Natural killer cell (primary cell): ENCODE measurements at regions of chr12 and their contacts with region 1.

Region 1: DNA sequence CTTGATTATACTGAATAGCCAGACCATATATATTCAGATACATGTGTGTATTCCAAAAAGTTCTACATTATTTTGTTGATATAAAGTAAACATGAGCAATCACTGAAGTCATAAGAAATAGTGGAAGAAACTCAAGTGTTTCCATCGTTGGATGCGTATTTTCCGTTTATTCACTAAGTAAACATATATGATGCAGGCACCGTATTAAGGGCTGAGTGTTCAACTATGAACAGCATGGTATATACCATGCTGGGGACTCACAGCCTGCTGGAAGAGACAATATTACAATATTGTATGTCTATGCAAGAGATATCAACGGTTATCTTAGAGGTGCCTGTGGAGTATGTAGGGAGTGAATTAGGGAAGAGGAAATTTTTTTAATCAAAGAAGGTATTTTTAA is 1.2 kb downstream of the PYROXD1 start:
- DNase-seq: peak in 1 of 2 donors; percentile 23
- ATAC-seq: no peak
- H3K4me3 ChIP-seq: peak overlapping the region; percentile 100
- H3K4me3 Mint-ChIP-seq: peak overlapping the region; percentile 94
- H3K27ac ChIP-seq: no peak overlapping the region
- H3K27ac Mint-ChIP-seq: peak overlapping the region; percentile 89 to 91
- H3K4me1 ChIP-seq: peaks cover 14% of the 10 kb centered on the region
- H3K4me1 Mint-ChIP-seq: peaks cover 36 to 40% of the 10 kb centered on the region in 2 donors
- H3K27me3 ChIP-seq: no peaks in the 10 kb centered on the region
- H3K27me3 Mint-ChIP-seq: no peaks in the 10 kb centered on the region
- CTCF ChIP-seq: no peak

Region 2: DNA sequence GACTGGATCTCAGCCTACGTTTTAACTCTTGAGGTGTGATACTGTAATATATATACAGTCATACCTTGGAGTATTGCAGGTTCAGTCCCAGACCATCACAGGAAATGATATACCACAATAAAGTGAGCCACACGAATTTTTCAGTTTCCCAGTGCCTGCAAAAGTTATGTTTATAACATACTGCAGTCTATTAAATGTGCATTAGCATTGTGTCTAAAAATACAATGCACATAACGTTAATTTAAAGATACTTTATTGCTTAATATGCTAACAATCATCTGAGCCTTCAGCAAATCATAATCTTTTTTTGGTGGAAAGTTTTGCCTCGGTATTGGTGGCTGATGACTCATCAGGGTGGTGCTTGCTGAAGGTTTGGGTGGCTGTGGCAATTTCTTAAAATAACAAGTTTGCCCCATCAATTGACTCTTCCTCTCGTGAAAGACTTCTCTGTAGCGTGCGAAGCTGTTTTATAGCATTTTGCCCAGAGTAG is 17.7 kb after region 1 on chr12:
- intact Hi-C with region 1: loop called (anchors 2 kb)
- DNase-seq: peak; percentile 19 to 72
- ATAC-seq: peak; percentile 77 to 90 (median 85)
- H3K4me3 ChIP-seq: no peak overlapping the region
- H3K4me3 Mint-ChIP-seq: peak overlapping the region; percentile 84
- H3K27ac ChIP-seq: peak overlapping the region; percentile 55
- H3K27ac Mint-ChIP-seq: peak overlapping the region; percentile 89
- H3K4me1 ChIP-seq: peaks cover 6% of the 10 kb centered on the region
- H3K4me1 Mint-ChIP-seq: peaks cover 24 to 26% of the 10 kb centered on the region in 2 donors
- H3K27me3 ChIP-seq: no peaks in the 10 kb centered on the region
- H3K27me3 Mint-ChIP-seq: no peaks in the 10 kb centered on the region
- CTCF ChIP-seq: no peak

Region 3: DNA sequence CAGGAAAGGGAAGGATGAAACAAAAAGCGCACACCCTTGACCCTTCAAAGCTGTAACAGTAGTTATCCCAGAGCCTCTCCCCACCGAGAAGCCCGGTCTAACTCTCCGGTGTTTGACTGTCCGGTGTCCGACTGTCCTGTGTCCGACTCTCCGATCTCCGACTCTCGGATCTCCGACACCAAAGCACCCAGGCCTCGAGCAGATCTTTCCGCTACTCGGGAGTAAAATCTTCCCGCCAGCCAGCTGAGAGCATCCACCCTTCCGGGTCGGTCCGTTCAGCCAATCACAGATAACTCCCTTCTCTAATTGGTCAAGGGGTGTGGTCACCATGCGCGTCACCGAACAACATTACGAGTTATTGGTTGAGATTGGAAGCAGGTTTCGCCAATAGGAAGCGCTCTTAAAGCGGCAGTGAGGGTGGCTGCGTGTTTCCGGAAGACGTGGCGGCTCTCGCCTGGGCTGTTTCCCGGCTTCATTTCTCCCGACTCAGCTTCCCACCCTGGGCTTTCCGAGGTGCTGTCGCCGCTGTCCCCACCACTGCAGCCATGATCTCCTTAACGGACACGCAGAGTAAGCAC is 62.8 kb after region 1 on chr12 and contains the starts of genes GOLT1B and RECQL:
- intact Hi-C with region 1: loop called (anchors 1 kb)
- DNase-seq: peak; percentile 82 to 98
- ATAC-seq: peak; percentile 95 to 99 (median 98)
- H3K4me3 ChIP-seq: peak within 1 kb of the TSS; percentile 92
- H3K4me3 Mint-ChIP-seq: no peak within 1 kb of the TSS
- H3K27ac ChIP-seq: peak within 1 kb of the TSS; percentile 78
- H3K27ac Mint-ChIP-seq: no peak within 1 kb of the TSS
- H3K4me1 ChIP-seq: peaks cover 17% of the 10 kb centered on the region
- H3K4me1 Mint-ChIP-seq: peaks cover 38 to 42% of the 10 kb centered on the region in 2 donors
- H3K27me3 ChIP-seq: no peaks in the 10 kb centered on the region
- H3K27me3 Mint-ChIP-seq: no peaks in the 10 kb centered on the region
- CTCF ChIP-seq: no peak
- total RNA-seq, gene GOLT1B: 30.9 to 38.0 (median 33.1) TPM
- total RNA-seq, gene RECQL: 39.4 to 46.8 (median 40.1) TPM